GM12878 (cell line): ENCODE measurements at regions of chr2 and their contacts with region 1.

Region 1: DNA sequence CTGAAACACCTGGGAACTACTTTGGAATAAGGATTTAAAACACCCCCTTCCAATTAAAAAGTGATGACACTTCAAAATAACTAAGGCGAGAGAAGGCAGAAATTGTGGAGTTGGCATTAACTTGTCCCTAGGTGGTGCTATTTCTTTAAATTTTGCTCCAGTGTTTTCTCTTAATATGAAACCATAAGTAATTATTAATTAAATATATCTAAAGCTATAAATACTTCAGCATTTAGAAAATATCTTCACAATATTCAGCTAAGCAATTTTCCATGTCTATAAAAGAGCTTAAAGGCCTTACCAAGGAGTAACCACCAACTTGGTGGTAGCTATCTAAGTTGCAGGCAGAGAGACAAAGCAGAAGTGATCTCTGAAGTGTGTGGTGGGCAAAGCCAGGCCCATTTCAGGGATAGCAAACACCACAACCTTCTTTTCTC is 186.8 kb upstream of the PGAP1 start:
- DNase-seq: no peak
- ATAC-seq: peak; percentile 89
- H3K4me3 ChIP-seq: no peak overlapping the region
- H3K27ac ChIP-seq: no peak overlapping the region
- H3K4me1 ChIP-seq: peaks cover 3% of the 10 kb centered on the region; the same call in 1 of the 2 replicates
- H3K27me3 ChIP-seq: no peaks in the 10 kb centered on the region
- CTCF ChIP-seq: peak; percentile 38 to 62 (median 48)
- EP300 ChIP-seq: no peak
- POLR2A ChIP-seq: no peak
- RAD21 ChIP-seq: peak; percentile 65

Region 2: DNA sequence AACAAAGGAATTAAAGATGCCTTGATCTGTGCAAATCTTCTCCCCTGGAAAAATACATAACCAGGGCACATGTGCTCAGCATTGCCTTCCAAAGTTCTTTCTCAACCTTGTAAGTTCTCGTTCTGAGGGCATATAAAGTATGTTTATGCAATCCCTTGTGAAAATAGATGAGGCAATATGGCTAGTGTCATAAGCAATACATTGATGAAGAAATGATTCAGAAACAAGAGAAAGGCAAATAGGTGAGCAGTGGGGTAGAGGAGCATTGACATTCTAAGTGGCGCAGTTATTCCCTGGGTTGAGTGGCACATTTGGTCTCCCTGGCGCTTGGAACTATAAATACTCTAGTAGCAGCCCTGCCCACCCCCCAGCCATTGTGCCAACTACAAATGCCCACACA is 129.4 kb before region 1 on chr2:
- CTCF ChIA-PET with region 1: no interaction called
- POLR2A ChIA-PET with region 1: no interaction called
- RAD21 ChIA-PET with region 1: no interaction called
- SMC1A ChIA-PET with region 1: no interaction called
- in situ Hi-C with region 1: no loop called
- intact Hi-C with region 1: no loop called
- DNase-seq: no peak
- ATAC-seq: no peak
- H3K4me3 ChIP-seq: no peak overlapping the region
- H3K27ac ChIP-seq: no peak overlapping the region
- H3K4me1 ChIP-seq: no peaks in the 10 kb centered on the region
- H3K27me3 ChIP-seq: no peaks in the 10 kb centered on the region
- CTCF ChIP-seq: no peak
- EP300 ChIP-seq: no peak
- POLR2A ChIP-seq: no peak
- RAD21 ChIP-seq: no peak

Region 3: GRCh38 chr2:197137231-197137630 is 23.9 kb after region 1 on chr2:
- CTCF ChIA-PET with region 1: interaction called, 43 read pairs
- POLR2A ChIA-PET with region 1: interaction called, 5 read pairs
- RAD21 ChIA-PET with region 1: interaction called, 23 read pairs
- SMC1A ChIA-PET with region 1: interaction called, 32 read pairs
- in situ Hi-C with region 1: no loop called
- intact Hi-C with region 1: no loop called
- DNase-seq: no peak
- ATAC-seq: no peak
- H3K4me3 ChIP-seq: no peak overlapping the region
- H3K27ac ChIP-seq: no peak overlapping the region
- H3K4me1 ChIP-seq: peaks cover 32% of the 10 kb centered on the region
- H3K27me3 ChIP-seq: no peaks in the 10 kb centered on the region
- CTCF ChIP-seq: no peak
- EP300 ChIP-seq: no peak
- POLR2A ChIP-seq: no peak
- RAD21 ChIP-seq: no peak

Region 4: GRCh38 chr2:197159661-197160211 is 46.4 kb after region 1 on chr2:
- CTCF ChIA-PET with region 1: interaction called, 398 read pairs
- POLR2A ChIA-PET with region 1: no interaction called
- RAD21 ChIA-PET with region 1: interaction called, 24 read pairs
- SMC1A ChIA-PET with region 1: interaction called, 478 read pairs
- in situ Hi-C with region 1: no loop called
- intact Hi-C with region 1: no loop called
- DNase-seq: no peak
- ATAC-seq: peak; percentile 37
- H3K4me3 ChIP-seq: no peak overlapping the region
- H3K27ac ChIP-seq: no peak overlapping the region
- H3K4me1 ChIP-seq: peaks cover 23% of the 10 kb centered on the region; the same call in 1 of the 2 replicates
- H3K27me3 ChIP-seq: no peaks in the 10 kb centered on the region
- CTCF ChIP-seq: no peak
- EP300 ChIP-seq: no peak
- POLR2A ChIP-seq: no peak
- RAD21 ChIP-seq: no peak

Region 5: DNA sequence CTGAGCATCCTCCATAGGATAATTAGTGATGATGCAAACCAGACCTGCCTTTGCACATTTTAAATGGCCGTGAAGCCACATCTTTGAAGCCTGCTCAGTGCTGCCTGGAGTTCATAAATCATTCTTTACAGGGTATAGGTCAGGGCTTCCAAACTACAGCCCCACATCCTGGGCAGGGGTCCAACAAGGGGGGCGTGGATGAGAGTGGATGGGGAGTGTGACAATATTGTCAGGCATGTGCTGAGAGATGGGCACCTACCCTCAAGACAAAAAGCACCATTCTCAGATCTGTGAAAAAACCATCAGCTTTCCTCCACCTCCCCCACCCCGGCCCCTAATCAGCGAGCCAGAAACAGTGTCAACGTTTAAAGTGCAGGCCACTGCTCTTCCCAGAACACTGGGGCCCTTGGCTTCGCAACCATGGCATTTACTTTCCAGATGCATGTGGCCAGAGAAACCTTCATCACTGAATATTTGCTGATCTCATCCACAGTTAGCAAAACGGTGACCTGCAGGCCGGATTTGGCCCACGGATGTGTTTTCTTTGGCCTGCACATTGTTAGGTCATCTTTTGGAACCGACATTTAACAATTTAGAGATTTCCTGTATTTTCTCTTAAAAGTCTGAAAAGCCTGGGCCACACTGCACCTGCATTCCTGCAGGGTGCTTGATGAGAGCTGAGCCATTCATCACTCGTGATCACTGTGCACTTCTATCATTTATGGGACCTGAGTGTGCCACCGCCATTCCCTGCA is 66.6 kb after region 1 on chr2:
- CTCF ChIA-PET with region 1: interaction called, 398 read pairs
- POLR2A ChIA-PET with region 1: no interaction called
- RAD21 ChIA-PET with region 1: interaction called, 21 read pairs
- SMC1A ChIA-PET with region 1: interaction called, 478 read pairs
- in situ Hi-C with region 1: no loop called
- intact Hi-C with region 1: no loop called
- DNase-seq: no peak
- ATAC-seq: no peak
- H3K4me3 ChIP-seq: no peak overlapping the region
- H3K27ac ChIP-seq: no peak overlapping the region
- H3K4me1 ChIP-seq: no peaks in the 10 kb centered on the region
- H3K27me3 ChIP-seq: no peaks in the 10 kb centered on the region
- CTCF ChIP-seq: no peak
- EP300 ChIP-seq: no peak
- POLR2A ChIP-seq: no peak
- RAD21 ChIP-seq: no peak

Region 6: GRCh38 chr2:197209742-197210408 is 96.6 kb after region 1 on chr2:
- CTCF ChIA-PET with region 1: interaction called, 10 read pairs
- POLR2A ChIA-PET with region 1: no interaction called
- RAD21 ChIA-PET with region 1: interaction called, 3 read pairs
- SMC1A ChIA-PET with region 1: interaction called, 7 read pairs
- in situ Hi-C with region 1: no loop called
- intact Hi-C with region 1: no loop called
- DNase-seq: peak; percentile 76
- ATAC-seq: peak; percentile 47
- H3K4me3 ChIP-seq: peak overlapping the region; percentile 28
- H3K27ac ChIP-seq: peak overlapping the region; percentile 97
- H3K4me1 ChIP-seq: peaks cover 94% of the 10 kb centered on the region
- H3K27me3 ChIP-seq: no peaks in the 10 kb centered on the region
- CTCF ChIP-seq: no peak
- EP300 ChIP-seq: peak in 1 of 2 experiments; percentile 21; a peak in 2 of 4 replicates
- POLR2A ChIP-seq: no peak
- RAD21 ChIP-seq: no peak

Region 7: GRCh38 chr2:197322724-197323720 is 209.7 kb after region 1 on chr2:
- CTCF ChIA-PET with region 1: interaction called, 8 read pairs
- POLR2A ChIA-PET with region 1: no interaction called
- RAD21 ChIA-PET with region 1: interaction called, 3 read pairs
- SMC1A ChIA-PET with region 1: interaction called, 22 read pairs
- in situ Hi-C with region 1: no loop called
- intact Hi-C with region 1: no loop called
- DNase-seq: no peak
- ATAC-seq: peak; percentile 52
- H3K4me3 ChIP-seq: peak overlapping the region; percentile 32; the same call in 1 of the 2 replicates
- H3K27ac ChIP-seq: 0 out of 2 replicates have a peak overlapping the region, but pooled peaks have one; percentile 7
- H3K4me1 ChIP-seq: peaks cover 18% of the 10 kb centered on the region; the same call in 1 of the 2 replicates
- H3K27me3 ChIP-seq: no peaks in the 10 kb centered on the region
- CTCF ChIP-seq: no peak
- EP300 ChIP-seq: no peak
- POLR2A ChIP-seq: peak; percentile 51
- RAD21 ChIP-seq: no peak

Region 8: DNA sequence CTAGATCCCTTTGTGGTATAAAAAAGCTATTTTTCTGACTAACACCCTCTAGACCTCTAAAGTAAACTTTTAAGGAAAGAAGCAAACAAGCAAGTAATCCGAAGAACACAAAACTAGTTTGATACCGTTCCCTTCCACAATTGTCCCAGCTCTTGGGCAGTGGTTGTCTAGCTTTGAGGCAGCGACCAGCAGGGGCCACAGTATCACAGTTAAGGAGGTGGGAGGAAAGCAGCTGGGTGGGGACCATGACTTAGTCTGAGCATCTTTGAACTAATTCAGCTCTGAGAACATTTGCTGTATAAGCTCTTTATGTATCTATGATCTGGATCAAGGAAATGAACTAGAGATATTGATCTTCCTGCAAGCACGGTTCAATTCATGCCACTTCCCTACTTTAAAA is 270.5 kb after region 1 on chr2:
- CTCF ChIA-PET with region 1: interaction called, 31 read pairs
- POLR2A ChIA-PET with region 1: no interaction called
- RAD21 ChIA-PET with region 1: interaction called, 20 read pairs
- SMC1A ChIA-PET with region 1: interaction called, 18 read pairs
- in situ Hi-C with region 1: loop called (anchors 5 kb)
- intact Hi-C with region 1: no loop called
- DNase-seq: no peak
- ATAC-seq: peak; percentile 36; the same call in 2 of the 3 replicates
- H3K4me3 ChIP-seq: no peak overlapping the region
- H3K27ac ChIP-seq: no peak overlapping the region
- H3K4me1 ChIP-seq: no peaks in the 10 kb centered on the region
- H3K27me3 ChIP-seq: no peaks in the 10 kb centered on the region; a peak in 1 of 4 replicates
- CTCF ChIP-seq: peak in 2 of 3 experiments; percentile 7 to 18; a peak in 1 of 6 replicates
- EP300 ChIP-seq: no peak
- POLR2A ChIP-seq: no peak
- RAD21 ChIP-seq: 0 out of 2 replicates have a peak, but pooled peaks have one; percentile 9